ENCODE measurements at regions of chr18 and their contacts with region 1.

Region 1: GRCh38 chr18:59631583-59632181 is 65.5 kb downstream of the CCBE1 start:
- ATAC-seq: peak in 2 of 8 experiments; percentile 21 to 26
- H3K4me3 ChIP-seq: no peak overlapping the region
- H3K27ac ChIP-seq: no peak overlapping the region
- H3K4me1 ChIP-seq: no peaks in the 10 kb centered on the region

Region 2: GRCh38 chr18:59823596-59824195 is 192.0 kb after region 1 on chr18:
- in situ Hi-C with region 1: loop called in 4 of 9 experiments (anchors 25 kb)
- ATAC-seq: peak; percentile 62 to 94 (median 84)
- H3K4me3 ChIP-seq: no peak overlapping the region
- H3K27ac ChIP-seq: no peak overlapping the region
- H3K4me1 ChIP-seq: peaks cover 0 to 8% of the 10 kb centered on the region in 2 donors

Region 3: DNA sequence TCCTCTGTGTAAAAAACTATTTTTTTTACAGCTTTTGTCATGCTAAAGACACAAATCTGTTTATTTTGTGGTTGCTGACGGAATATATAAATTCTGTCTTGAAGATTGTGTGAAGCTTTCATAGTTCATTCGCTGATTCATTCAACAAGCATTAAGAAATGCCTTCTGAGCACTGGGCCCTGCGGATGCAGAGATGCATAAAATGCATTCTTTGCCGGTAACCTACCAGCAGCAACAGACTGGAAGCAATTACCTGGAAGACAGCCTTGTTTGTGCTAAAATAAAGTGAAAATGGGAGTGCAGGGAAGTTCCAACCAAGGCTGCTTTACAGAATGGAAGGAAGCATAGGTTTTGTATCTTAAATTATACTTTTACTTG is 387.8 kb after region 1 on chr18:
- in situ Hi-C with region 1: no loop called
- ATAC-seq: peak in 6 of 8 experiments; percentile 31 to 74 (median 54)
- H3K4me3 ChIP-seq: no peak overlapping the region
- H3K27ac ChIP-seq: no peak overlapping the region
- H3K4me1 ChIP-seq: peaks cover 3 to 22% of the 10 kb centered on the region in 2 donors